ENCODE measurements at regions of chr15 and their contacts with region 1.

Region 1: GRCh38 chr15:70097337-70098169 is at the start of gene TLE3:
- DNase-seq: peak; percentile 99
- H3K4me3 Mint-ChIP-seq: peak within 1 kb of the TSS; percentile 99
- H3K27ac Mint-ChIP-seq: peak within 1 kb of the TSS; percentile 100
- H3K4me1 Mint-ChIP-seq: peaks cover 55% of the 10 kb centered on the region
- H3K27me3 Mint-ChIP-seq: peaks cover 18% of the 10 kb centered on the region
- total RNA-seq, gene TLE3: 59.2 TPM

Region 2: GRCh38 chr15:69452692-69453521 is 644.6 kb before region 1 on chr15 and contains the start of gene RPLP1:
- CTCF ChIA-PET with region 1: interaction called, 3 read pairs
- POLR2A ChIA-PET with region 1: interaction called, 38 read pairs
- DNase-seq: peak; percentile 96
- H3K4me3 Mint-ChIP-seq: peak within 1 kb of the TSS; percentile 90
- H3K27ac Mint-ChIP-seq: peak within 1 kb of the TSS; percentile 97
- H3K4me1 Mint-ChIP-seq: peaks cover 42% of the 10 kb centered on the region
- H3K27me3 Mint-ChIP-seq: no peaks in the 10 kb centered on the region
- total RNA-seq, gene RPLP1: 1,524 to 1,535 TPM

Region 3: GRCh38 chr15:69576035-69576526 is 521.5 kb before region 1 on chr15:
- CTCF ChIA-PET with region 1: interaction called, 16 read pairs
- POLR2A ChIA-PET with region 1: interaction called, 3 read pairs
- DNase-seq: peak; percentile 70
- H3K4me3 Mint-ChIP-seq: no peak overlapping the region
- H3K27ac Mint-ChIP-seq: no peak overlapping the region
- H3K4me1 Mint-ChIP-seq: peaks cover 32% of the 10 kb centered on the region
- H3K27me3 Mint-ChIP-seq: peaks cover 7% of the 10 kb centered on the region

Region 4: GRCh38 chr15:69719527-69720240 is 377.9 kb before region 1 on chr15:
- CTCF ChIA-PET with region 1: interaction called, 5 read pairs
- POLR2A ChIA-PET with region 1: interaction called, 16 read pairs
- DNase-seq: peak; percentile 75
- H3K4me3 Mint-ChIP-seq: no peak overlapping the region
- H3K27ac Mint-ChIP-seq: peak overlapping the region; percentile 23
- H3K4me1 Mint-ChIP-seq: peaks cover 70% of the 10 kb centered on the region
- H3K27me3 Mint-ChIP-seq: peaks cover 56% of the 10 kb centered on the region

Region 5: DNA sequence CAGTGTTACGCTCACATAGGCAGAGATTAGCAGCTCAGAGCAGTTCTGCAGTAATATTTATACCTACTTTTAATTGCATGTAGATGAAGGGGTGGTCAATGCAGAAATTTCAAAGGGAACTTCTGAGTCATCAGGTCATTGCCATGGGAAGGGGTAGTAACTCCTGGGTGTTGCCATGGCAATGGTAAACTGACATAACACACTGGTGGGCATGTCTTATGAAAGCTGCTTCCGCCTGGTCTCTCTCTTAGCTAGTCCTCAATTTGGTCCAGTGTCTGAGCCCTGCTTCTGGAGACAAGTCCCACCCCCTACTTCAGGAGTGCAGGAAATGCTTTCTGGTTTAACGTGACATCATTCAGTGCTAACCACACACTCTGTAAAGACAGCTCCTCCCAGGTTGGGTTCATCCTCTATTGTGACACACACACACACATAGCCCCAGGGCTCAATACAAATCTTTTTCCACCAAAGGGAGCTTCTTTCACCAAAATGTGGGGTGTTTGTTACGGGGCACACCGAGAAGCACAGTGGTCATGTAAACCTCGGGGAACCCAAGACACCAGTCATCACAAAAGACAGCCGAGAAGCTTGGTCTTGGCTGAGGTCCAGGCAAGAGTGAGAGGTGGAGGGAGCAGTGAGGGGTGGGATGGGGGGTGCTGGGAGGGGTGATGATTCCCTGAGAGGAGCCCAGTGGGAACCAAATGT is 74.3 kb before region 1 on chr15:
- CTCF ChIA-PET with region 1: interaction called, 13 read pairs
- POLR2A ChIA-PET with region 1: interaction called, 37 read pairs
- DNase-seq: peak; percentile 73
- H3K4me3 Mint-ChIP-seq: peak overlapping the region; percentile 43
- H3K27ac Mint-ChIP-seq: peak overlapping the region; percentile 77
- H3K4me1 Mint-ChIP-seq: peaks cover 23% of the 10 kb centered on the region
- H3K27me3 Mint-ChIP-seq: peaks cover 29% of the 10 kb centered on the region

Region 6: GRCh38 chr15:70127288-70127746 is 29.8 kb after region 1 on chr15:
- CTCF ChIA-PET with region 1: no interaction called
- POLR2A ChIA-PET with region 1: no interaction called
- DNase-seq: no peak
- H3K4me3 Mint-ChIP-seq: no peak overlapping the region
- H3K27ac Mint-ChIP-seq: no peak overlapping the region
- H3K4me1 Mint-ChIP-seq: no peaks in the 10 kb centered on the region
- H3K27me3 Mint-ChIP-seq: peaks cover 22% of the 10 kb centered on the region

Region 7: DNA sequence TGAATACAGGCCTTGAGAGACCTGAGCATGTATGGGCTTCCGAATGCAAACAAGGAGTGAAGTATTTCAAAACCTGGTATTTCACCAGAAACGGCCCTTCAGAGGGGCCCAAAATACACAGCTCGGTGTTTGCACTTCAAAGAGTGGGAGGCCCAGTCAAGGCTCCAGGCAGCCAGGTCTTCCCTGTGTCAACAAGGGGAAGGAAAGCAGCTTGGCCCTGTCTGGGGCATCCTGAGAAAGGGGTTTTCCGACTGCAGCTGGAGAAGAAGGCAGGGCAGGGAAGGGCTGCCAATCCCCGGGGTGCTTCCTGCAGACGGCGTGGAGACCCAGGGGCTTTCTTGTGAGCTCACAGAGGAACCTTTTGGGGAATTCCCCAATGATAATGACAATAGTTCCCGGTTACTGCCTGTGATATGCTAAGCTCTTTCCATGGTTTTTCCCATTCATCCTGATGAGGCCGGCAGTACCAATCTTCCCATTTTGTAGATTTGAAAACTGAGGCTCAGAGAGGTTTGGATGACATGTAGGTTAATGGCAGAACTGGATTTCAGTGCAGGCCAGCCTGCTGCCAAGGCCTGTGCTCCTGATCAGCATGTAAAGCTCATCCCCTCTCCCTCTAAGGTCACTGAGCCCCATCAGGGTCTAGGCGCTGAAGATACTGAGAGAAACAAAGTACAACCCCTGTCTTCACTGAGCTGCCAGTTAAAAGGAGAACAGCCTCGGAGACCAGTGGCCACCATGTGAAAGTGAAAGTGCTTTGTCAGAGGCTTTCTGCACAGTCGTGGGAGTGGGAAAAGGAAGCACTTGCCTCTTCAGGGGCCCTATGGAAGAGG is 43.2 kb after region 1 on chr15:
- CTCF ChIA-PET with region 1: no interaction called
- POLR2A ChIA-PET with region 1: interaction called, 13 read pairs
- DNase-seq: no peak
- H3K4me3 Mint-ChIP-seq: no peak overlapping the region
- H3K27ac Mint-ChIP-seq: no peak overlapping the region
- H3K4me1 Mint-ChIP-seq: peaks cover 31% of the 10 kb centered on the region
- H3K27me3 Mint-ChIP-seq: peaks cover 28% of the 10 kb centered on the region

Measured in activated CD4-positive, alpha-beta memory T cell treated with anti-CD3 and anti-CD28 coated beads, Interleukin-2, amount 10 ng/mL, durations not matched to agents 7 days and 5 days (primary cell).